ENCODE measurements at regions of chr14 and their contacts with region 1.

Region 1: DNA sequence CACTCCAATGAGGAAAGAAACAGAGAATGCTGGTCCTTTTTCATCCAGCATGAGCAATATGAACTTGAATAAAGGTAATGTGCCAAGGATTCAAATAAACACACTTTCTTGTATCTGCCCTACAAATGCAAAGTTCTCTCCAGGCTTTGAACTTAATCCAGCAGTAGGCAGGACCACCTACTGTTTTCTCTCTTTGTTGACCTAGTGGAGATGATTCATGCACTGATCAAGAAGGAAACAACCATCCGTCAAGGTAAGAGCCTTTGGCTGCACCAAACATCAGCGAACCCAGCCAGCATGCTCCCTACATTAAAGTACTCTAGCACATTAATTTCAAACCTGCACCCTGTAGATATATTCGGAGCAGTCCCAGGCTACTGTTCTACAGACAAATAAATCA is 489.3 kb downstream of the GALC start:
- DNase-seq: no peak

Region 2: GRCh38 chr14:87397499-87397898 is 106.2 kb before region 1 on chr14:
- intact Hi-C with region 1: no loop called
- DNase-seq: no peak

Region 3: DNA sequence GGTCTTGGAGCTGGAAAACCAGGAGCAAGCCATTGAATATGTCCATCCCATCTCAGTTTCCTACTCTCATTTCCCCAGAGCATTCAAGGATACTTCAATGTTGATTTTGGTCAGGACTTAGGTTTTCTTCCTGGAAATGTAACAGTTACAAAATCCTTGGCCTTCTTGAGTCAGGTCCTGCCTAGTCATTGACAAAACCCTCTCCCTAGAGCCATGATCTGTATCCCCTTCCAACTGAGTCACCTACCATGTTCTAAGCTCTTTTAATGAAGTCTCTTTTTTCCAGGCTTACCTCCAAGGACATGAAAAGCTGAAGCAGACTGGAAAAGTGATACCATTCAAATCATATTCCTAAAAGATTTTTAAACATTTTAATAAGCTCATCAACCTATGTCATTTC is 59.9 kb before region 1 on chr14:
- intact Hi-C with region 1: loop called (anchors 2 kb)
- DNase-seq: no peak

Measured in posterior cingulate gyrus (tissue), 11 donors.